PC-9 (cell line): ENCODE measurements at regions of chr5 and their contacts with region 1.

Region 1: GRCh38 chr5:40770764-40771163 is 15.0 kb upstream of the TTC33 start:
- DNase-seq: no peak
- H3K4me3 ChIP-seq: no peak overlapping the region
- H3K27ac ChIP-seq: no peak overlapping the region
- H3K4me1 ChIP-seq: 0 out of 2 replicates have a peak, but pooled peaks cover under 1% of the 10 kb centered on the region
- H3K27me3 ChIP-seq: no peaks in the 10 kb centered on the region
- CTCF ChIP-seq: no peak

Region 2: DNA sequence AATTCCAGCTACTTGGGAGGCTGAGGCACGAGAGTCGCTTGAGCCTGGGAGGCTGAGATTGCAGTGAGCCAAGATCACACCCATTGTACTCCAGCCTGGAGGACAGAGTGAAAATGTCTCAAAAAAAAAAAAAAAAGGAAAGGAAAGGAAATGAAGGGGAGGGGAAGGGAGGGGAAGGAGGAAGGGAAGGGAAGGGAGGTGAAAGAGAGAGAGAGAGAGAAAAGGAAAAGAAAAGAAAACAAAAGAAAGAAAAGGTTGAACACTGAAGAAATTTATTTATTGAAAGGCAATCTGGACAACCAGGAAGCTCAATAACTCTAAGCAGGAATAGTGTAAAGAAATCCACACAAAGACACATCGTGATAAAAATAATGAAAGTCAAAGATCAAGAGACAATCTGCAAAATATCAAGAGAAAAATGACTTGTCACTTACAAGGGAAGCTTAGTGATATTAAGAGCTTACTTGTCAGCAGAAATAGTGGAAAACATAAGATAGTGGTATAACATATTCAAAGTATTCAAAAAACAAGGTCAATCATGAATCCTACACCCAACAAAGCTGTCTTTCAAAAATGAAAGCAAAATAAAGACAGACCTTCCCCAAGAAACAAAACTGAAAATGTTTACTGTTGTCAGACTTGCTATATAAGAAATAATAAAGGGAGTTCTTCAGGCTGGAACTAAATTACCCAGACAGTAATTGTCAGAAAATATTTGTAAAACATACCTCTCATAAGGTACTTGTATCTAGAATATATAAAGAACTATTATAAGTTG is 1122.5 kb after region 1 on chr5:
- CTCF ChIA-PET with region 1: no interaction called
- POLR2A ChIA-PET with region 1: interaction called, 15 read pairs
- intact Hi-C with region 1: no loop called
- DNase-seq: no peak
- H3K4me3 ChIP-seq: no peak overlapping the region
- H3K27ac ChIP-seq: no peak overlapping the region
- H3K4me1 ChIP-seq: peaks cover 5% of the 10 kb centered on the region; the same call in 1 of the 2 replicates
- H3K27me3 ChIP-seq: peaks cover 9% of the 10 kb centered on the region; the same call in 1 of the 2 replicates
- CTCF ChIP-seq: no peak